Naive thymus-derived CD4-positive, alpha-beta T cell (primary cell): ENCODE measurements at regions of chr12 and their contacts with region 1.

Region 1: DNA sequence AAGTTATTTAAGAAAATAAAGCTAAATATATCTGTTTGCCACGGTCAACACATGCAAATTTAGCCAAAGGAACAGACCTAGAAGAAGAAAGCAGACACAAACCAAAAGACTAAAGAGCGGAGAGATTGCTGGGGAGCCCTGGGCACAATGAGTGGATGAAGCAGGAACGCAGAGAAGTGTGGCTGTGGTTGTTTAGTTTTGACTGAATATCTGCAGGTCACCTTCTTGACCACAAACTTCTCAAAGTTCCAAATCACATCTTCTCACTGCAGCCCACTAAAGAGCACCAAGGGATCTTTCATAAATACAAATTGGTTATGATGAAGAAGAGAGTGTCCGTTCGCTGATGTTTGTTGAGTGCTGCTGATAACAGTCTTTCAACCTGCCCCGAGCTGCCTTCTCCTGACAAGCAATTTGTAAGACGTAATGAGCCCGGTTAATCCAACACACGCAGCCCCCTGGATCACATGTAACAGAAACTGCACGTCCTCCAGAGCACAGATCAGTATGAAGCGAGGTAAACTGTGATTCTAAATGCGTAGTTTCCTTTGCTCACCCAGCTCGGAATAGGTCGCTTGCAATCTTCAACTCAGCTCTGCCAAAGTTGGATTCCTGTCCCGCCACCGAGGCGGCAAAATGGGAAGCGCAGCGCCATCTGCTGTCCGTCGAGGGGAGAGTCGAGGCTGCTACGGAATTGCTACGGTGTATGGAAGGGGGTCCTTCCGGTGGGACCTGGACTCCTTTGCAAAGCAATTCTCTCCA is 120.8 kb downstream of the GXYLT1 start:
- DNase-seq: peak; percentile 41 to 73 (median 60)
- ATAC-seq: peak; percentile 86
- H3K4me3 ChIP-seq: peak overlapping the region; percentile 39
- H3K4me3 Mint-ChIP-seq: peak overlapping the region; percentile 67 to 86 (median 78)
- H3K27ac ChIP-seq: no peak overlapping the region
- H3K27ac Mint-ChIP-seq: peak overlapping the region in 3 of 9 donors; percentile 6 to 53 (median 14)
- H3K4me1 ChIP-seq: no peaks in the 10 kb centered on the region
- H3K4me1 Mint-ChIP-seq: peaks cover 0 to 14% (median 10%) of the 10 kb centered on the region in 7 donors
- H3K27me3 ChIP-seq: no peaks in the 10 kb centered on the region
- H3K27me3 Mint-ChIP-seq: peaks cover 12 to 15% (median 12%) of the 10 kb centered on the region in 5 donors

Region 2: GRCh38 chr12:41264281-41264680 is 759.6 kb before region 1 on chr12:
- CTCF ChIA-PET with region 1: no interaction called
- POLR2A ChIA-PET with region 1: no interaction called
- intact Hi-C with region 1: loop called in 1 of 2 experiments (anchors 5 kb)
- DNase-seq: no peak
- ATAC-seq: no peak
- H3K4me3 ChIP-seq: no peak overlapping the region
- H3K4me3 Mint-ChIP-seq: no peak overlapping the region
- H3K27ac ChIP-seq: no peak overlapping the region
- H3K27ac Mint-ChIP-seq: no peak overlapping the region
- H3K4me1 ChIP-seq: no peaks in the 10 kb centered on the region
- H3K4me1 Mint-ChIP-seq: no peaks in the 10 kb centered on the region
- H3K27me3 ChIP-seq: no peaks in the 10 kb centered on the region
- H3K27me3 Mint-ChIP-seq: peaks cover 0 to 13% (median 6%) of the 10 kb centered on the region in 5 donors

Region 3: GRCh38 chr12:41684997-41685396 is 338.9 kb before region 1 on chr12:
- CTCF ChIA-PET with region 1: no interaction called
- POLR2A ChIA-PET with region 1: no interaction called
- intact Hi-C with region 1: loop called in 1 of 2 experiments (anchors 5 kb)
- DNase-seq: no peak
- ATAC-seq: no peak
- H3K4me3 ChIP-seq: no peak overlapping the region
- H3K4me3 Mint-ChIP-seq: no peak overlapping the region
- H3K27ac ChIP-seq: no peak overlapping the region
- H3K27ac Mint-ChIP-seq: no peak overlapping the region
- H3K4me1 ChIP-seq: no peaks in the 10 kb centered on the region
- H3K4me1 Mint-ChIP-seq: no peaks in the 10 kb centered on the region
- H3K27me3 ChIP-seq: no peaks in the 10 kb centered on the region
- H3K27me3 Mint-ChIP-seq: peaks cover 0 to 10% (median 4%) of the 10 kb centered on the region in 5 donors

Region 4: DNA sequence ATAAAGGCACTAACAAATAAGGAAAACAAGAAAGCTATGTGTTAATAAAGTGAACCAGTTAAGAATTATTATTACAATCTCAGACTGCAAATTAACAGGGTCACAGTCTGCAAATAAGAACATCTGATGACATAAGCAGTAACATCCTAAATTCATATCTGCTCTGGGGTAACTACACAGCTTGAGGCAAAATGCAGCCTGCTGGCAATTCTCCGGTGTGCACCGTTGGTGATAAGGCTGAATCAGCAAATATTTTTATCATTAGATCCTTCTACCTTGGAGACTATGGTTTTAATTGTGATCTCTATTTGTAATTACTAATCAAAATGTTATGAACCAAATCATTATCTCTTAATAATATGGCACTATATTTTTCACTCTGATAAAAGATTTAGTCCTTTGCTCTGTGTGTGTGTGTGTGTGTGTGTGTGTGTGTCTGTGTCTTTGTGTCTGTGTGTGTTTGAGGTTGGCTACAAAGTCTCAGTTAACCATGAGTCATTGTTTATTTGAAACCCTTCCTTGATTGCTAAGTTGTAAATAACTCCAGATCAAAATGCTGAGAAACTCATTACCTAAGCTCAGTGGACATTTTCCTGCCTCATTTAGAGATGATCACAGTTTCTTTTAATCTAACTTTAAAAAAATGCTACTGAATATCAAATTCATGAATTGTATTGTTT is 321.9 kb before region 1 on chr12:
- CTCF ChIA-PET with region 1: no interaction called
- POLR2A ChIA-PET with region 1: no interaction called
- intact Hi-C with region 1: no loop called
- DNase-seq: no peak
- ATAC-seq: no peak
- H3K4me3 ChIP-seq: no peak overlapping the region
- H3K4me3 Mint-ChIP-seq: no peak overlapping the region
- H3K27ac ChIP-seq: no peak overlapping the region
- H3K27ac Mint-ChIP-seq: no peak overlapping the region
- H3K4me1 ChIP-seq: no peaks in the 10 kb centered on the region
- H3K4me1 Mint-ChIP-seq: peaks cover 0 to 1% (median 0%) of the 10 kb centered on the region in 7 donors
- H3K27me3 ChIP-seq: no peaks in the 10 kb centered on the region
- H3K27me3 Mint-ChIP-seq: no peaks in the 10 kb centered on the region

Region 5: DNA sequence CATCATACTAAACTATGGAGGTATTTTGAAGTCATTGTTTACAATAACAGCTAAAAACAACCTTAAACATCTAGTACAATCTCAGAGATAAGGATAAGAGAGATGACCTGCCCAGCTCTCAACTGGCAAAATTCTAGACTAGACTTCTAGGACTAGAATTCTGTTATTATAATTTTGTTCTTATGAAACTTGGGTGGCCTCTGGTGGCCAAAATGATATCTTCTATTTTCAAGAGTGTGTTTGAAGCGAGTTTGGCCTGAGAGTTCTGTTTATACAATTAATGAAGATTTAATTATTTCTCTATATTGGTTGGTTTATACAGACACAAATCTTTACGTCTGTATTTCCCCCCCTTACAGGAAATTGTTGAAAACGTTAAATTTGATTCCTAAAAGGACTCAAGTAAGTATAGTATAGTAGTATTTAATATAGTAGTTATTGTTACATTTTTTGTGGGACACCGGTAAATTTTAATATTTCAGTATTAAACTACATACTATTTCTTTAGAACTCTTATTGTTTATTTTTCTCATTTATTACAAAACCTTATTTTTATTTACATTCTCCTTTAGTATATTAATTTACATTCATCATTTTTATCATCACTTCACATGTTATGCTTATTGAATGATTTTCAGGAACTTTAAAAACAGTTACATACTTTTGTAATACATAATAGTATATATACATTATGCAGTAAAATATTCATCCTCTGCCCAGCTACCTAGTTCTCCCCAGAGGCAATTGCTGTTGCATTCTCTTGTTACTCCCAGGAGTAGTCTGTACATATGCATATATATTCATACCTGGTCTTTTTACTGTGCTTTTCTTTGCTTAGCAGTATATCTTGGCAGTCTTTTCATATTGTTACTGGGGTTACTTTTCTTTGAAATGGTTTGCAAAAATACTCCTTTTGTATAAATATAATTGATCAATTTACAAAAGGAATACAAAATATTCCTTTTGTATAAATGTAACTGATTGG is 308.7 kb after region 1 on chr12:
- CTCF ChIA-PET with region 1: interaction called, 4 read pairs
- POLR2A ChIA-PET with region 1: no interaction called
- intact Hi-C with region 1: loop called (anchors 1 kb)
- DNase-seq: peak in 7 of 9 donors; percentile 12 to 54 (median 42)
- ATAC-seq: peak; percentile 77
- H3K4me3 ChIP-seq: no peak overlapping the region
- H3K4me3 Mint-ChIP-seq: peak overlapping the region in 3 of 10 donors; percentile 7 to 30 (median 14)
- H3K27ac ChIP-seq: no peak overlapping the region
- H3K27ac Mint-ChIP-seq: peak overlapping the region in 1 of 9 donors; percentile 2
- H3K4me1 ChIP-seq: peaks cover 5 to 31% of the 10 kb centered on the region in 2 donors
- H3K4me1 Mint-ChIP-seq: peaks cover 47 to 87% (median 73%) of the 10 kb centered on the region in 7 donors
- H3K27me3 ChIP-seq: no peaks in the 10 kb centered on the region
- H3K27me3 Mint-ChIP-seq: no peaks in the 10 kb centered on the region